ENCODE measurements at regions of chr17 and their contacts with region 1.

Region 1: DNA sequence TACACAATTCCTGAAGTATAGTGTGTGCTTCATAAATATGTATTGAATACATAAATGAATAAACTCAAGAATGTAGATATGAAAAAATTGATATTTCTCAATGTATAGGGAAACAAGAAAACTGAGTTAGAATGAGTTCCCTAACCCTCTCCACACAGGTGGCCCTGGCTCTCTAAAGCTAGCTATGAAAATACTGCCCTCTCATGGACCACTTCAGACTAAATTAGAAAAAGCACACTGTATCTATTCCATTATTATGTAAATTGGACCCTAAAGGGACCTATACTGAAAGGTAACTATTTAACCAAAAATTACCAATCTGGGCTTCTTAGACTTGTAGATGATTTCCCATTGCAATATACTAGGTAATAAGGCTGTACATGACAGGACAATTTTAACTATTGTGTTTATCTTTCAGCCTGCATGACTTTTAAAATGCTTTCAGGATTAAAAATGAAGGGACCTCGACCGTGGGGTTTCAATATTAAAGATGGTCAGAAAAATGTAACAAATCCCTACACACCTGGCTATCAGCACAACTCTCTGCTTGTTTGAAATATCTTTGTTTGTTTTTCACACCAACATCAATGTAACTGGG is 672.5 kb upstream of the KIF2B start:
- DNase-seq: no peak
- H3K4me3 ChIP-seq: no peak overlapping the region
- H3K27ac ChIP-seq: no peak overlapping the region
- H3K4me1 ChIP-seq: no peaks in the 10 kb centered on the region
- H3K27me3 ChIP-seq: no peaks in the 10 kb centered on the region
- CTCF ChIP-seq: no peak
- EP300 ChIP-seq: no peak
- POLR2A ChIP-seq: no peak

Region 2: DNA sequence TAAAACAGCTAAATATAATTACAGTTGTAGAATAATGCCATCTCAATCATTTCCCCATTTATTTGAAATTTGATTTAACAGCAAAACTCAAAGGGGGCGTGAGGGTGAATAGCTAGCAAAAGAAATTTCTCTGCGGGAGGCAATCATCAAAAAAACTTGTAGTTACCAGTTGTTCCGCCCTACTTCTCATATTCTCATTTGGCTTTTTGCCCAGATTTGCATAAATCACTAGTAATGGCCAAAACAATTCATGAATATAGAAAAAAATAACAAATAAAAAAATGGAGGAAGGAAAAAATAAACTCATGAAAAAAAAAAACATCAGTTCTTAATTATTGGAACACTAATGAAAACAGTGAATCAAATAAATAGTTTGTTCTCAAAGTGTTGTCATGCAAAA is 50.1 kb before region 1 on chr17:
- intact Hi-C with region 1: no loop called
- DNase-seq: no peak
- H3K4me3 ChIP-seq: no peak overlapping the region
- H3K27ac ChIP-seq: no peak overlapping the region
- H3K4me1 ChIP-seq: no peaks in the 10 kb centered on the region
- H3K27me3 ChIP-seq: no peaks in the 10 kb centered on the region
- CTCF ChIP-seq: no peak
- EP300 ChIP-seq: no peak
- POLR2A ChIP-seq: no peak

Region 3: DNA sequence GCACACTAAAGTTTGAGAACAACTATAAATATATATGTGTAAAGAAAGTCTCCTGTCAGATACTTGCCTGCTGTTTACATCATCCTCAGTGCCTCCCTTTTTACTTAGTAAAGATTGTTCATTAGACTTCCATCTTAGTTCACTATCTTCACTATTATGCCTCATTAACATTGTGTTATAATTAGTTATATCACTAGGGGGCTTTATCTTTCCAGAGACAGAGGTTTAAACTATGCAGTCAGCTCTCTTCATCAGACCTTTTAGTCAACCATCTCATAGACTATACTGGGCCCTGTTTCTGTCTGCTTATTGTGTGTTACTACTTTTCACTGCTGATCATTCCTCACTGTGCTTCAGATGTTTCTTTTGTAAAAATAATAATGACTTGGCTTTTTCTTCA is 41.7 kb after region 1 on chr17:
- intact Hi-C with region 1: no loop called
- DNase-seq: no peak
- H3K4me3 ChIP-seq: no peak overlapping the region
- H3K27ac ChIP-seq: no peak overlapping the region
- H3K4me1 ChIP-seq: no peaks in the 10 kb centered on the region
- H3K27me3 ChIP-seq: no peaks in the 10 kb centered on the region
- CTCF ChIP-seq: no peak
- EP300 ChIP-seq: no peak
- POLR2A ChIP-seq: no peak

Region 4: GRCh38 chr17:53234138-53234537 is 83.9 kb after region 1 on chr17:
- intact Hi-C with region 1: loop called in 1 of 4 experiments (anchors 10 kb)
- DNase-seq: no peak
- H3K4me3 ChIP-seq: no peak overlapping the region
- H3K27ac ChIP-seq: no peak overlapping the region
- H3K4me1 ChIP-seq: no peaks in the 10 kb centered on the region
- H3K27me3 ChIP-seq: no peaks in the 10 kb centered on the region
- CTCF ChIP-seq: no peak
- EP300 ChIP-seq: no peak
- POLR2A ChIP-seq: no peak

Measured in ovary (tissue), 10 donors.